Naive thymus-derived CD4-positive, alpha-beta T cell (primary cell): ENCODE measurements at regions of chrX and their contacts with region 1.

Region 1: GRCh38 chrX:110180176-110180927 is 137.5 kb downstream of the AMMECR1 start:
- DNase-seq: no peak
- ATAC-seq: no peak
- H3K4me3 ChIP-seq: no peak overlapping the region
- H3K4me3 Mint-ChIP-seq: no peak overlapping the region
- H3K27ac ChIP-seq: no peak overlapping the region
- H3K27ac Mint-ChIP-seq: peak overlapping the region in 4 of 9 donors; percentile 14 to 47 (median 24)
- H3K4me1 ChIP-seq: no peaks in the 10 kb centered on the region
- H3K4me1 Mint-ChIP-seq: peaks cover 0 to 9% (median 5%) of the 10 kb centered on the region in 7 donors
- H3K27me3 ChIP-seq: no peaks in the 10 kb centered on the region
- H3K27me3 Mint-ChIP-seq: no peaks in the 10 kb centered on the region

Region 2: GRCh38 chrX:109812236-109812635 is 368.1 kb before region 1 on chrX:
- CTCF ChIA-PET with region 1: no interaction called
- POLR2A ChIA-PET with region 1: no interaction called
- intact Hi-C with region 1: no loop called
- DNase-seq: no peak
- ATAC-seq: no peak
- H3K4me3 ChIP-seq: no peak overlapping the region
- H3K4me3 Mint-ChIP-seq: no peak overlapping the region
- H3K27ac ChIP-seq: no peak overlapping the region
- H3K27ac Mint-ChIP-seq: no peak overlapping the region
- H3K4me1 ChIP-seq: no peaks in the 10 kb centered on the region
- H3K4me1 Mint-ChIP-seq: no peaks in the 10 kb centered on the region
- H3K27me3 ChIP-seq: no peaks in the 10 kb centered on the region
- H3K27me3 Mint-ChIP-seq: peaks cover 0 to 7% (median 6%) of the 10 kb centered on the region in 5 donors

Region 3: DNA sequence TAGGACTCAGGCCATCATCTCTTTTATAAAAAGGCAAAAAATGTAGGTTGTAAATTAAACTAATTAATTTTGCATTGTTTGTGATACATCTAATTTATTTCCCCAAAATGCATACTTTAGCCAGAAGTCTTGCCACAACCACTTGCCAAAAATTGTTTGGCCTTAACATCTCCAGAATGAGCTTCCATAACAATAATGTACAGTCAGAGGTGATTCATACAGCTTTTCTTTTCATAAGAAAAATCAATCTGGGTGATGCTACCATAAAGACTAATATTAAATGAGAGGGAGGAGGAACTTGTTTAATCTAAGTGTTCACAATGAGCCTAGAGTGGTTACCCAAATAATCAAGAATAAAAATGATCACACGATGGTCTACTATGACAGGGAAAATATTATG is 78.2 kb after region 1 on chrX:
- CTCF ChIA-PET with region 1: no interaction called
- POLR2A ChIA-PET with region 1: no interaction called
- intact Hi-C with region 1: loop called in 1 of 2 experiments (anchors 10 kb)
- DNase-seq: no peak
- ATAC-seq: no peak
- H3K4me3 ChIP-seq: no peak overlapping the region
- H3K4me3 Mint-ChIP-seq: peak overlapping the region in 1 of 10 donors; percentile 38
- H3K27ac ChIP-seq: no peak overlapping the region
- H3K27ac Mint-ChIP-seq: no peak overlapping the region
- H3K4me1 ChIP-seq: peaks cover 0 to 6% of the 10 kb centered on the region in 2 donors
- H3K4me1 Mint-ChIP-seq: peaks cover 3 to 36% (median 21%) of the 10 kb centered on the region in 7 donors
- H3K27me3 ChIP-seq: no peaks in the 10 kb centered on the region
- H3K27me3 Mint-ChIP-seq: no peaks in the 10 kb centered on the region